Natural killer cell (primary cell): ENCODE measurements at regions of chr14 and their contacts with region 1.

Region 1: DNA sequence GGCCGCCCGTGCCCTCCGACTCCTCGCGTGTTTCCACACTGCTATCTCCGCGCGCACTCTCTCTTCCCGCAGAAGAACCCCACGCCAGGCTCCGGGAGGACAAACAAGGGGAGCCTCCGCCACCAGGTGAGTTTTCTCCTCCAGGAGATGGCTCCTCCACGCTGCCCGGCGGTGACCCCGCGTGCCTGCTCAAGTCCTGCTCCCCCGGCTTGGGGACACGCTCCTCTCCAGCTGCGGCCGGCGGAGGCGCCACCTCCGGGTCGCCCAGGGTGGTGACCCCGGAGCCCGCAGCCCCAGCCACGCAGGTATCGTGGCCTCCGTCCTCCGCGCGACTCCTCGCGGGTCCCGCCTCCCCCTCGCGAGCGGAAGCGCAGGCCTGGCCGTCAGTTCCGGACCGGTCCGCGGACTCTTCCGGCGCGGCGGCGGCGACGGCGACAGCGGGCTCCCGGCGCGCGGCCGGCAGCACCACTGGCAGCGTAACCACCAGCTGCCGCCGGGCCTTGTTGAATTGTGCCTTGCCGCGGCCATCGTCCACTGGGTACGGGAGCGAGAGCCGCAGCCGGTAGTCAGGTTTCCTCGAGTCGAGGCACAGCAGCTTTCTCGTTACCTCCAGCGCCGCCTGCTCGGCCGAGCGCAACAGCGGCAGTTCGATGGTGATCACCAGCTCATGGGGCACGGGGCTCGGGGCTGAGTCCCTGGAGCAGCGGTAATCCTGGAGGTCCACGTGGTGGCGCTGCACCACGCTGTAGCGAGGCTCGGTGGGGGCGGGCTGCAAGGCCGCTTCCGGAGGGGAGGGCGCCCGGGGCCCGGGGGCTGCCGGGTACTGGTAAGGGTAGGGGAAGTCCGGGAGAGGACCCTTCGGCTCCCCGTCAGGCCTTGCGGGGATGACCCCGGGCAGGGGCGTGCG is 1.2 kb downstream of the DNAAF2 start:
- DNase-seq: peak; percentile 91 to 97
- ATAC-seq: peak; percentile 84 to 95 (median 84)
- H3K4me3 ChIP-seq: peak overlapping the region; percentile 98
- H3K4me3 Mint-ChIP-seq: peak overlapping the region; percentile 97
- H3K27ac ChIP-seq: peak overlapping the region; percentile 93
- H3K27ac Mint-ChIP-seq: peak overlapping the region; percentile 96
- H3K4me1 ChIP-seq: peaks cover 32% of the 10 kb centered on the region
- H3K4me1 Mint-ChIP-seq: peaks cover 31 to 44% of the 10 kb centered on the region in 2 donors
- H3K27me3 ChIP-seq: no peaks in the 10 kb centered on the region
- H3K27me3 Mint-ChIP-seq: no peaks in the 10 kb centered on the region
- CTCF ChIP-seq: peak; percentile 89

Region 2: GRCh38 chr14:49585803-49586672 is 47.9 kb before region 1 on chr14 and contains the start of gene RPS29:
- intact Hi-C with region 1: loop called (anchors 1 kb)
- DNase-seq: peak; percentile 100
- ATAC-seq: peak; percentile 83 to 95 (median 85)
- H3K4me3 ChIP-seq: peak within 1 kb of the TSS; percentile 87
- H3K4me3 Mint-ChIP-seq: peak within 1 kb of the TSS; percentile 98
- H3K27ac ChIP-seq: peak within 1 kb of the TSS; percentile 96
- H3K27ac Mint-ChIP-seq: peak within 1 kb of the TSS; percentile 98 to 99
- H3K4me1 ChIP-seq: peaks cover 19% of the 10 kb centered on the region
- H3K4me1 Mint-ChIP-seq: peaks cover 44 to 54% of the 10 kb centered on the region in 2 donors
- H3K27me3 ChIP-seq: no peaks in the 10 kb centered on the region
- H3K27me3 Mint-ChIP-seq: no peaks in the 10 kb centered on the region
- CTCF ChIP-seq: no peak
- total RNA-seq, gene RPS29: 1,124 to 1,711 (median 1,654) TPM

Region 3: DNA sequence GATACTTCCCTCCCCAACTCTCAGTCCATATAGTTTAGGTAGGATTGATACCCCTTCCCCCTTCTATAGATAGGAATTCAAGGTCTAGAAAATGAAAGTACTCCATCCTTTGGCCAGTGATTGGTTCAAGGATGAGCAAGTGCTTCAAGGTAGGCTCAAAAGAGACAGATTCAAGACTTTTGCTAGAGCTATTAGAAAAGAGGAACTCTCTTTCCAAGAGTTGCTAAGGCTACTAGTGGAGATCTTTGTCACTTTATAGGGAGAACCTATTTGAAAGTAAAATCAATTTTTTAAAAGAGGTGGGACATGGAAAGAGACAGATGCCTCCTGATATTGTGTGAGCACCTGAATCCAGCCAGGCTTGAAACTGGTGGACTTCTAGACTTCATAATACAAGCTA is 36.6 kb after region 1 on chr14:
- intact Hi-C with region 1: no loop called
- DNase-seq: no peak
- ATAC-seq: no peak
- H3K4me3 ChIP-seq: no peak overlapping the region
- H3K4me3 Mint-ChIP-seq: no peak overlapping the region
- H3K27ac ChIP-seq: no peak overlapping the region
- H3K27ac Mint-ChIP-seq: no peak overlapping the region
- H3K4me1 ChIP-seq: no peaks in the 10 kb centered on the region
- H3K4me1 Mint-ChIP-seq: no peaks in the 10 kb centered on the region
- H3K27me3 ChIP-seq: no peaks in the 10 kb centered on the region
- H3K27me3 Mint-ChIP-seq: no peaks in the 10 kb centered on the region
- CTCF ChIP-seq: no peak

Region 4: GRCh38 chr14:49692811-49693734 is 59.2 kb after region 1 on chr14 and contains the start of gene KLHDC1:
- intact Hi-C with region 1: loop called (anchors 1 kb)
- DNase-seq: peak; percentile 73 to 90
- ATAC-seq: peak; percentile 81 to 88 (median 81)
- H3K4me3 ChIP-seq: peak within 1 kb of the TSS; percentile 65
- H3K4me3 Mint-ChIP-seq: peak within 1 kb of the TSS; percentile 82
- H3K27ac ChIP-seq: peak within 1 kb of the TSS; percentile 66
- H3K27ac Mint-ChIP-seq: peak within 1 kb of the TSS; percentile 76 to 86
- H3K4me1 ChIP-seq: peaks cover 9% of the 10 kb centered on the region
- H3K4me1 Mint-ChIP-seq: peaks cover 28 to 30% of the 10 kb centered on the region in 2 donors
- H3K27me3 ChIP-seq: no peaks in the 10 kb centered on the region
- H3K27me3 Mint-ChIP-seq: no peaks in the 10 kb centered on the region
- CTCF ChIP-seq: no peak
- total RNA-seq, gene KLHDC1: 6.3 to 7.0 (median 6.9) TPM

Region 5: GRCh38 chr14:49828640-49829039 is 194.7 kb after region 1 on chr14:
- intact Hi-C with region 1: loop called (anchors 1 kb)
- DNase-seq: no peak
- ATAC-seq: no peak
- H3K4me3 ChIP-seq: no peak overlapping the region
- H3K4me3 Mint-ChIP-seq: no peak overlapping the region
- H3K27ac ChIP-seq: no peak overlapping the region
- H3K27ac Mint-ChIP-seq: no peak overlapping the region
- H3K4me1 ChIP-seq: no peaks in the 10 kb centered on the region
- H3K4me1 Mint-ChIP-seq: peaks cover 0 to 5% of the 10 kb centered on the region in 2 donors
- H3K27me3 ChIP-seq: no peaks in the 10 kb centered on the region
- H3K27me3 Mint-ChIP-seq: no peaks in the 10 kb centered on the region
- CTCF ChIP-seq: no peak

Region 6: GRCh38 chr14:50116181-50116956 is 482.5 kb after region 1 on chr14 and contains the start of gene VCPKMT:
- intact Hi-C with region 1: loop called (anchors 5 kb)
- DNase-seq: peak; percentile 97 to 98
- ATAC-seq: peak; percentile 97 to 100 (median 97)
- H3K4me3 ChIP-seq: peak within 1 kb of the TSS; percentile 99
- H3K4me3 Mint-ChIP-seq: peak within 1 kb of the TSS; percentile 95
- H3K27ac ChIP-seq: peak within 1 kb of the TSS; percentile 99
- H3K27ac Mint-ChIP-seq: peak within 1 kb of the TSS; percentile 96 to 97
- H3K4me1 ChIP-seq: peaks cover 8% of the 10 kb centered on the region
- H3K4me1 Mint-ChIP-seq: peaks cover 14% of the 10 kb centered on the region in 2 donors
- H3K27me3 ChIP-seq: no peaks in the 10 kb centered on the region
- H3K27me3 Mint-ChIP-seq: no peaks in the 10 kb centered on the region
- CTCF ChIP-seq: no peak
- total RNA-seq, gene VCPKMT: 19.4 to 23.9 (median 21.8) TPM